ENCODE measurements at regions of chr17 and their contacts with region 1.

Region 1: GRCh38 chr17:65017207-65017774 is 39.2 kb downstream of the GNA13 start:
- DNase-seq: no peak
- ATAC-seq: peak; percentile 44 to 66; a peak in 3 of 6 replicates
- H3K4me3 ChIP-seq: peak overlapping the region; percentile 12; the same call in 1 of the 3 replicates
- H3K27ac ChIP-seq: peak overlapping the region; percentile 78
- H3K4me1 ChIP-seq: peaks cover 73% of the 10 kb centered on the region
- CTCF ChIP-seq: no peak
- EP300 ChIP-seq: no peak
- POLR2A ChIP-seq: no peak
- RAD21 ChIP-seq: no peak

Region 2: DNA sequence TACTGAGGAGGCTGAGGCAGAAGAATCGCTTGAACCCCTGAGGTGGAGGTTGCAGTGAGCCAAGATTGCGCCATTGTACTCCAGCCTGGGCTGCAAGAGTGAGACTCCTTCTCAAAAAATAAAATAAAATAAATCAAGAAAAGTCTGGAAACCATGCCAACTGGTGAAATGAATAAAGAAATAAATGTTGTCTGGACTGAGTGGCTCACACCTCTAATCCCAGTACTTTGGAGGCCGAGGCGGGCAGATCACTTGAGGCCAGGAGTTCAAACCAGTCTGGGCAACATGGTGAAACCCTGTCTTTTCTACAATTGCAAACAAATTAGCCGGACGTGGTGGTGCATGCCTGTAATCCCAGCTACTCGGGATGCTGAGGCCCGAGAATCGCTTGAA is 97.3 kb before region 1 on chr17:
- CTCF ChIA-PET with region 1: no interaction called
- POLR2A ChIA-PET with region 1: no interaction called
- DNase-seq: peak in 1 of 2 experiments; percentile 35
- ATAC-seq: peak in 1 of 2 experiments; percentile 49; a peak in 3 of 6 replicates
- H3K4me3 ChIP-seq: peak overlapping the region; percentile 52
- H3K27ac ChIP-seq: peak overlapping the region; percentile 86 to 91
- H3K4me1 ChIP-seq: peaks cover 8% of the 10 kb centered on the region; the same call in 1 of the 3 replicates
- CTCF ChIP-seq: no peak
- EP300 ChIP-seq: no peak
- POLR2A ChIP-seq: no peak
- RAD21 ChIP-seq: no peak

Region 3: DNA sequence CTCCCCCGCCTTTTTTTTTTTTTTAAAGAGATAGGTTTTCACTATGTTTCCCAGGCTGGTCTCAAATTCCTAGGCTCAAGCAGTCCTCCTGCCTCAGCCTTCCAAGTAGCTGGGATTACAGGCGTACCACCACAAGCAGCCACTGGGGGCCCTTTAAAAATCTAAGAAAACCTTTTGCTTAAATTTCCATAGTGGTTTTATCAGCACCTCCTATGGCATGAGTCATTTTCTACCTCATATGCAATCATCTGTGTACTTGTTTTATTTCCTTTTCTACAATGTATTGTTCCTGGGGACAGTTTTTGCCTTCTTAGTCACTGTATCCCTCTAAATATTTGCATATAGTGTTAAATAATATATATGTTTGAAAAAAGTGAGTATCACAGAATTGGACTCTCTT is 10.0 kb after region 1 on chr17:
- CTCF ChIA-PET with region 1: interaction called, 10 read pairs
- POLR2A ChIA-PET with region 1: no interaction called
- DNase-seq: peak; percentile 74 to 83
- ATAC-seq: peak; percentile 84 to 88
- H3K4me3 ChIP-seq: no peak overlapping the region
- H3K27ac ChIP-seq: peak overlapping the region; percentile 22 to 54; a peak in 2 of 6 replicates
- H3K4me1 ChIP-seq: peaks cover 49% of the 10 kb centered on the region
- CTCF ChIP-seq: peak; percentile 34
- EP300 ChIP-seq: no peak
- POLR2A ChIP-seq: no peak
- RAD21 ChIP-seq: peak in 1 of 2 experiments; percentile 37; a peak in 3 of 5 replicates

Measured in A549 (cell line).